ENCODE measurements at regions of chr19 and their contacts with region 1.

Region 1: DNA sequence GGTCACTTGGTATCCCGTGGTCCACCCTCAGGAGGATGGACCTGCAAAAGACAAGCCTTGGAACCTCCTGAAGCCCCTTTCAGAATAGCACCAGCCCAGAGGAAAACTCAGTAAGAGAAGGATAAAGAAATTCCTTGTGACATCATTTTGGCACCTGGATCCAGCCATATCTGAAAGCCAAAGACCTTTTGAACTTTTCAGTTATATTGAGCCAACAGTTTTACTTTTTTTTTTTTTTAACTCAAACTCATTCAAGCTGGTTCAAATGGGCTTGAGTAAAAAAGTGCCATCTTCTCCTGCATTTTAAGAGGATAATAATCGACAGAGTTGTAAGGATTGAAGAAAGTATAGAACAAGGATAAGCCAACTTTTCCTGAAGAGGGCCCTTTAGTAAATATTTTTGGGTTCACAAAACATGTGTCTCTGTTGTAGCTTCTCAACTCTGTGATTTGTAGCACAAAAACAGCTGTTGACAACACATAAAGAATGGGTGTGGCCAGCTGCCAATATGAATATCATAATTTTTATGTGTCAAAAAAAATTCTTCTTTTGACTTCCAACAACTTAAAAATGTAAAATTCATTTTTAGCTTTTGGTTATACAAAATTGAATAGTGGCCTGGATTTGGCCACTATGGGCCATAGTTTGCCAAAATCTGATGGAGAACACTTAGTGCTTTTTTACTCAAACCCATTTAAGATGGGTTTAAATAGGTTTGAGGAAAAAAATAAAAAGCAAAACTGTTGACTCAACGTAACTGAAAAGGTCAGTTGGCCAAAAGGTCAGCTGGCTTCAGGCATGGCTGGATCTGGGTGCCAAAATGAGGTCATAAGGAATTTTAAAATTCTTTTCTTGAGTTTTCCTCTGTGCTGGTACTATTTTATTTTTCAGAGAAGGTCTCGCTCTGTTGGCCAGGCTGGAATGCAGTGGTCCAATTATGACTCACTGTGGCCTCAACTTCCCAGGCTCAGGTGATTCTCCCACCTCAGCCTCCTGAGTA is 50.7 kb downstream of the ACSBG2 start:
- DNase-seq: no peak
- H3K4me3 ChIP-seq: no peak overlapping the region
- H3K27ac ChIP-seq: no peak overlapping the region
- H3K4me1 ChIP-seq: no peaks in the 10 kb centered on the region
- H3K27me3 ChIP-seq: no peaks in the 10 kb centered on the region
- CTCF ChIP-seq: no peak

Region 2: GRCh38 chr19:6092329-6093286 is 93.5 kb before region 1 on chr19:
- CTCF ChIA-PET with region 1: no interaction called
- dilution Hi-C with region 1: no loop called
- in situ Hi-C with region 1: no loop called
- intact Hi-C with region 1: no loop called
- DNase-seq: peak; percentile 97
- H3K4me3 ChIP-seq: peak overlapping the region; percentile 30 to 50 (median 45)
- H3K27ac ChIP-seq: peak overlapping the region; percentile 99
- H3K4me1 ChIP-seq: peaks cover 42% of the 10 kb centered on the region
- H3K27me3 ChIP-seq: no peaks in the 10 kb centered on the region
- CTCF ChIP-seq: peak in 1 of 2 donors; percentile 32

Region 3: GRCh38 chr19:6412447-6413091 is 226.4 kb after region 1 on chr19:
- CTCF ChIA-PET with region 1: no interaction called
- dilution Hi-C with region 1: loop called (anchors 10 kb)
- in situ Hi-C with region 1: no loop called
- intact Hi-C with region 1: no loop called
- DNase-seq: no peak
- H3K4me3 ChIP-seq: no peak overlapping the region
- H3K27ac ChIP-seq: no peak overlapping the region
- H3K4me1 ChIP-seq: no peaks in the 10 kb centered on the region
- H3K27me3 ChIP-seq: no peaks in the 10 kb centered on the region
- CTCF ChIP-seq: peak; percentile 60 to 63

Measured in mammary epithelial cell (primary cell).